IMR-90 (cell line): ENCODE measurements at regions of chr2 and their contacts with region 1.

Region 1: DNA sequence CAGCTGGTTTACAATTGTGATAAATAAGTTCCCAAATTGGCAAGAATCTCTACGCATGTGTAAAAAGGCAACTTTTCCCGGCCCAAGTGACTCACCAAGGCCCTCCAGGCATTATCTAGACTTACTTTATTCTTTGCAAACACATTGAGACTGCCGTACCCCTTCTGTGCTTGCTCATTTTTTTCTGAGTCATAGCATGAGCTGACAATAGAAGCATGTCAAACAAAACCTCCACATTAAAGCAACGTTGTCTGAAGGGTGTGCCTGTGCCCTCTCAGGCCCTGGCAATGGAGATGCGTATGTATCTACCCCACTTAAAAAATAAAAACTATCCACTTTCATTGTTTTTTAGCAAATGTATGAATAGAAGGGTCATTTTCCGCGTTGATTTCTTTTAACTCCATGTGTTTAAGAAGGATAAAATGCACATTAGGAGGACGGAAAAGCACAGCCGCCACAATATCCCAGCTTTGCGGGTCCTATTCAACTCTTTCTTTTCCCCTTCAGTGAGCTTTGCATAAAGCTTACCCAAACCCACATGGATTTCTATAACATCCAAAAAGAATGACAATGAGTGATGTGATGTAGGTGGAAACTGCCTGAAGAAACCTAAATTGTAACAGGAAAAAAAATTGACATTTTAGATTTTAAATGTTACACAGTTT is 298.2 kb downstream of the CDCA7 start:
- DNase-seq: peak; percentile 96
- ATAC-seq: peak; percentile 94
- H3K4me3 ChIP-seq: no peak overlapping the region
- H3K27ac ChIP-seq: peak overlapping the region; percentile 66; the same call in 1 of the 2 replicates
- H3K4me1 ChIP-seq: peaks cover 14% of the 10 kb centered on the region
- H3K27me3 ChIP-seq: no peaks in the 10 kb centered on the region
- CTCF ChIP-seq: no peak
- POLR2A ChIP-seq: no peak
- RAD21 ChIP-seq: no peak

Region 2: GRCh38 chr2:173571021-173571882 is 81.6 kb before region 1 on chr2:
- CTCF ChIA-PET with region 1: no interaction called
- POLR2A ChIA-PET with region 1: no interaction called
- dilution Hi-C with region 1: no loop called
- in situ Hi-C with region 1: no loop called
- intact Hi-C with region 1: no loop called
- DNase-seq: peak; percentile 39
- ATAC-seq: peak; percentile 53; the same call in 1 of the 2 replicates
- H3K4me3 ChIP-seq: no peak overlapping the region
- H3K27ac ChIP-seq: no peak overlapping the region
- H3K4me1 ChIP-seq: no peaks in the 10 kb centered on the region
- H3K27me3 ChIP-seq: peaks cover 5% of the 10 kb centered on the region
- CTCF ChIP-seq: peak; percentile 45
- POLR2A ChIP-seq: no peak
- RAD21 ChIP-seq: peak; percentile 59

Region 3: DNA sequence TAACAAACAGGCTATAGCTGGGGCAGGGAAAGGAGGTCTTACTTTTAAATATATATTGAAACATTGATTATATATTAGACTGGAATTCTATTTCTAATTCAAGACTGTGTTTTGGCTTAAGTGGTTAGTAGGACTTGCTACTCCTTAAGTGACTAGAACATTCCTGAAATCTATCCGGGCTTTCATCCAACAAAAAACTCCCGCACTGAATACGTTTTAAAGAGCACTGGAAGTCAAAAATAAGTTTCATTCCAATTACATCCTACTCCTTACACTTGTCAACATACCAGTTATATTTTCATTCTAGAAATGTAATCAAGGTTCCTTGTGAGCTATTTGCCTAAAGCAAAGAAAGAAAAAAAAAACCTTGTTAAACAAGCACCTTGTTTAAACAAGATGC is 107.7 kb after region 1 on chr2:
- CTCF ChIA-PET with region 1: no interaction called
- POLR2A ChIA-PET with region 1: no interaction called
- dilution Hi-C with region 1: no loop called
- in situ Hi-C with region 1: no loop called
- intact Hi-C with region 1: no loop called
- DNase-seq: peak; percentile 41
- ATAC-seq: no peak
- H3K4me3 ChIP-seq: no peak overlapping the region
- H3K27ac ChIP-seq: no peak overlapping the region
- H3K4me1 ChIP-seq: no peaks in the 10 kb centered on the region
- H3K27me3 ChIP-seq: peaks cover 23% of the 10 kb centered on the region
- CTCF ChIP-seq: no peak
- POLR2A ChIP-seq: no peak
- RAD21 ChIP-seq: no peak

Region 4: DNA sequence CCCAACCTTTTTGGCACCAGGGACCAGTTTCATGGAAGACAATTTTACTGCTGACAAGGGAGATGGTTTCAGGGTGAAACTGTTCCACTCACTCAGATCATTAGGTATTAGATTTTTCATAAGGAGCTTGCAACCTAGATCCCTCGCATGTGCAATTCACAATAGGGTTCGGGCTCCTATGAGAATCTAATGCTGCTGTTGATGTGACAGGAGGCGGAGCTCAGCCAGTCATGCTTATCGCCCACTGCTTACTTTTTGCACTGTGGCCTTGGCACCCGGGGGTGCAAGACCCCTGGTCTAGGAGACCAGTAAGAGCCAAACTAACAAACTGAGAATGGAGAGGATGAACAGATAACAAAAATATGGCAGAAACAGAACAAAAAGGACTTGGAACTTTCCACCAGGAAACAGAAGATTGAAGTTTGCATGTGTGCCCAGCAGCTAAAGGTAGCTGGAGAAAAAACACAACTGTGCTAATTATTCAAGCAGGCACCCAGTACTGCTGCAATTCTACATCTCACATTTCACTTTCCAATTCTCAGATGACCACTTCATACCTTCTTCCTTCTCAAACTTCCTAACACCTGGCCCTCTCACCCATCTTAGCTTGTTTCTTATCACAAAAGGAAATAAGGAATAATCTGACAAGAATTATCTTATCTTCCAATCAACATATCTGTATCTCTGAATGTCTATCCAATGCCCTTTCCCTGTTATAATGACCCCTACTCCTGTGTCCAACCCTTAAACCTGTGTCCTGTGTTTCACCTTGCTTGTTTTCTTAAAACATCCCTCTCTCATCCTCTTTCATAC is 287.5 kb after region 1 on chr2:
- CTCF ChIA-PET with region 1: no interaction called
- POLR2A ChIA-PET with region 1: no interaction called
- dilution Hi-C with region 1: no loop called
- in situ Hi-C with region 1: no loop called
- intact Hi-C with region 1: loop called (anchors 10 kb)
- DNase-seq: no peak
- ATAC-seq: no peak
- H3K4me3 ChIP-seq: no peak overlapping the region
- H3K27ac ChIP-seq: no peak overlapping the region
- H3K4me1 ChIP-seq: peaks cover 4% of the 10 kb centered on the region
- H3K27me3 ChIP-seq: no peaks in the 10 kb centered on the region
- CTCF ChIP-seq: no peak
- POLR2A ChIP-seq: no peak
- RAD21 ChIP-seq: no peak

Region 5: GRCh38 chr2:174051741-174052583 is 399.1 kb after region 1 on chr2:
- CTCF ChIA-PET with region 1: no interaction called
- POLR2A ChIA-PET with region 1: no interaction called
- dilution Hi-C with region 1: no loop called
- in situ Hi-C with region 1: no loop called
- intact Hi-C with region 1: loop called (anchors 10 kb)
- DNase-seq: peak; percentile 83
- ATAC-seq: peak; percentile 95
- H3K4me3 ChIP-seq: no peak overlapping the region
- H3K27ac ChIP-seq: peak overlapping the region; percentile 58
- H3K4me1 ChIP-seq: peaks cover 18% of the 10 kb centered on the region
- H3K27me3 ChIP-seq: no peaks in the 10 kb centered on the region
- CTCF ChIP-seq: 0 out of 2 replicates have a peak, but pooled peaks have one; percentile 22
- POLR2A ChIP-seq: no peak
- RAD21 ChIP-seq: peak; percentile 25; the same call in 1 of the 2 replicates